ENCODE measurements at regions of chr11 and their contacts with region 1.

Region 1: DNA sequence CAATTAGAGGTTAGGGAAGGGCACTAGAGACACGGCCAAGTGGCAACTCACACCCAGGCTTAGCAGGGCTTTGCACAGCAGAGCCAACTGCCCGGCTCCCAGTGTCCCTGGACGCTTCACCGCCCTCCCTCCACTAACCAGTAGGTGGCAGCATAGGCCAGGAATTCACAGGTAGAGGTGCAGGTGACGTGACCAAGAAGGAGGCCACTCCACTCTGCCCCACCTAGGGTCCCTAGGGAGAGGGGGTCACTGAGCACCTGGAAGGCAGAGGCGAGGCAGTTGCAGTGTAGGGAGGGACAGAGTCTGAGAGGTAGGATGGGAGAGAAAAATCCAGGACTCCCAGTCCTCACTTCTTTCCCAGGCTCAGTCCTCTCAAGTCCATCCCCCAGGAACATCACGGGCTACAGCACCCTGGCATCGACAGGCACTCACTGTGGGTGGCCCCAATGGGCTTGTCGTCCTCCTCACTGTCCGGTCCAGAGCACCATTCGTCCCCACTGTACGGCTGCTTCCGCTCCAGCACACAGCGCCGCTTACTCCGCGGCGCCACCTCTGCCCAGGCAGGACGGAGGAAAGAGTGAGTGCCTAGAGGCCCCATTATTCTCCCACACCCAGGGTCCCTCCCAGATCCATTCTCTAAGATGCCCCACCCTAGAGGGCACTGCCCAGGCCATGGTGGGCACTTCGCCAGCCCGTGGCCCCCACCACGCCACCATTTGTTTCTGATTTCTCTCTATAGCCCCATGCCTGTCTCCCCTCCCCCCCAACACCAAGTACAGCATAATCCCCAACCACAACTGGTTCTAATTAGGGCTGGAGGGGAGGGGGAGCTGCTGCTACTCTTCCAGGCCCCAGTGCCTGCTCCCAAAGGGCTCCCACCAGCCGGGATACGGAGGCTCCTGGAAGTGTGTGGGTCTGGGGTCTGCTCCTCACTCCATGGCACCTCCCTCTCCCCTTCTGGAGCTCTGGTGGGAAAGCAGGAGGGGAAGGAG is 18.4 kb downstream of the BCL9L start:
- DNase-seq: peak; percentile 81 to 92 (median 90)
- H3K4me3 ChIP-seq: peak overlapping the region in 4 of 59 donors; percentile 11 to 16 (median 15)
- H3K27ac ChIP-seq: peak overlapping the region in 49 of 59 donors; percentile 1 to 98 (median 58)
- H3K27me3 ChIP-seq: no peaks in the 10 kb centered on the region
- CTCF ChIP-seq: peak; percentile 84 to 100 (median 96)

Region 2: DNA sequence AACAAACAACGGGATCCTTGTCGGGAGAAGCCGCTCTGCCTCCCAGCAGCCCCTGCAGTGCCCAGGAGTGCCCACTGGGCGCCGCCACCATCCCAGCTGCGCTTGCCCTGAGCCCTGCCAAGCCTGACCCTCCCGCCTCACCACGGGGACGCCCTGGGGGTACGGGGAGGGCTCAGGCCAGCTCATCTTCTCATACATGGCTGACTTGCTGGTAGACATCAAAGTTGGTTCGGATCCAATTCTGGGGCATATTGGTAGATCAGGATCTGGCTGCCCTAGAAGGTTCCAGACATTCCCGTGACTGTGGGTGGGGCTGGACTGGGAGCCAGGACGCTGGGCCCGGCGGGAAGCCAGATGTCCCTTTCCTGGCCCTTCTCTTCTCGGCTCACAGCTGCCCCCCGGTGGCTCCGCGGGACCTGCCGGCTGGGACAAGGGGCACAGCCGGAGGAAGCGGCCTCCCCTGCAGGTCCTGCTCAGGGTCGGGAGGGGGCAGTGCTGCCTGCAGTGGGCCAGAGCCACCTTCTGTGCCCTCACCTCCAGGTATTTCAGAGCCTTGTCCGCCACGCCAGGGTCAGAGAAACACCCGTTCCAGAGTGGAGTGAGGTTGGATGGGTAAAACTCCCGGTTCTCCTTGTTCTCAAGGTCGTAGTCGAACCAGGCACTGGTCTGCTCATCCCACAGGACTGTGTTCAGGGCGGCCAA is 217.3 kb before region 1 on chr11:
- intact Hi-C with region 1: loop called in 1 of 2 experiments (anchors 5 kb)
- DNase-seq: peak; percentile 83 to 96 (median 93)
- H3K4me3 ChIP-seq: peak overlapping the region; percentile 20 to 65 (median 52)
- H3K27ac ChIP-seq: peak overlapping the region; percentile 23 to 98 (median 93)
- H3K27me3 ChIP-seq: no peaks in the 10 kb centered on the region
- CTCF ChIP-seq: peak; percentile 53 to 96 (median 82)

Region 3: GRCh38 chr11:118791111-118791965 is 116.0 kb before region 1 on chr11 and contains the start of gene DDX6:
- intact Hi-C with region 1: loop called (anchors 5 to 10 kb)
- DNase-seq: peak; percentile 83 to 94 (median 90)
- H3K4me3 ChIP-seq: peak within 1 kb of the TSS; percentile 64 to 98 (median 87)
- H3K27ac ChIP-seq: peak within 1 kb of the TSS; percentile 94 to 100 (median 99)
- H3K27me3 ChIP-seq: no peaks in the 10 kb centered on the region
- CTCF ChIP-seq: peak in 30 of 56 donors; percentile 18 to 52 (median 38)
- total RNA-seq, gene DDX6: 139 to 229 (median 190) TPM

Region 4: GRCh38 chr11:118928108-118928870 is 20.9 kb after region 1 on chr11:
- intact Hi-C with region 1: loop called (anchors 1 kb)
- DNase-seq: peak; percentile 84 to 96 (median 92)
- H3K4me3 ChIP-seq: peak overlapping the region; percentile 65 to 100 (median 82)
- H3K27ac ChIP-seq: peak overlapping the region; percentile 83 to 100 (median 98)
- H3K27me3 ChIP-seq: no peaks in the 10 kb centered on the region
- CTCF ChIP-seq: peak; percentile 84 to 98 (median 94)

Region 5: DNA sequence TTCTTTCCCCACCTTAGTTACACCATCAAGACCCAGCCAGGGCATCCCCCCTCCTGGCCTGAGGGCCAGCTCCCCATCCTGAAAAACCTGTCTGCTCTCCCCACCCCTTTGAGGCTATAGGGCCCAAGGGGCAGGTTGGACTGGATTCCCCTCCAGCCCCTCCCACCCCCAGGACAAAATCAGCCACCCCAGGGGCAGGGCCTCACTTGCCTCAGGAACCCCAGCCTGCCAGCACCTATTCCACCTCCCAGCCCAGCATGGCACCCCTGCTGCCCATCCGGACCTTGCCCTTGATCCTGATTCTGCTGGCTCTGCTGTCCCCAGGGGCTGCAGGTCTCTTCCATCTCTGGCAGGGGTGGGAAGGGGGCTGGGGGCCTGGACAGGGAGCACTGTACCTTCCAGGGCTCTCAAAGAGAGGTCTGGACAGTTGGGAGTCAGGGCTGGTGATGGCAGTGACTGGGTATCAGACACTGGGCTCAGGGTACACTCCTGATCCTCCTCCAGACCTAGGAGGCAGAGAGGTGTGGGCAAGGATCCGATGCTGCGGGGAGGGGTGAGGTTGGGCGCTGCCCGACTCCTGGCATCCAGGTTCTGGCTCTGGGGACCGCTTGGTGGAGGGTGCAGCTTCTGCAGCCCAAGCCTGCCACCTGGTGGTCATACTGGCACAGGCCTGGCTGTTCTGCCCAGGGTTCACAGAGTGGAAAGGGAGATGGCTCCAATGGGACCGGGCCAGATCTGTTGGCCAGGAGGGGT is 48.9 kb after region 1 on chr11 and contains the start of gene UPK2:
- intact Hi-C with region 1: loop called (anchors 1 to 2 kb)
- DNase-seq: peak; percentile 85 to 94 (median 92)
- H3K4me3 ChIP-seq: peak within 1 kb of the TSS in 1 of 59 donors; percentile 8
- H3K27ac ChIP-seq: peak within 1 kb of the TSS in 1 of 59 donors; percentile 27
- H3K27me3 ChIP-seq: peaks cover 0 to 2% (median 0%) of the 10 kb centered on the region in 45 donors
- CTCF ChIP-seq: peak; percentile 86 to 99 (median 98)
- total RNA-seq, gene UPK2: 0.43 to 1.2 (median 0.59) TPM in 27 of 120 experiments, not detected in the others

Region 6: GRCh38 chr11:119196833-119197483 is 289.6 kb after region 1 on chr11:
- intact Hi-C with region 1: loop called in 1 of 2 experiments (anchors 10 kb)
- DNase-seq: peak in 4 of 10 donors; percentile 24 to 72 (median 49)
- H3K4me3 ChIP-seq: no peak overlapping the region
- H3K27ac ChIP-seq: no peak overlapping the region
- H3K27me3 ChIP-seq: no peaks in the 10 kb centered on the region
- CTCF ChIP-seq: peak; percentile 62 to 87 (median 76)

Region 7: GRCh38 chr11:119315131-119316015 is 408.0 kb after region 1 on chr11:
- intact Hi-C with region 1: loop called in 1 of 2 experiments (anchors 10 kb)
- DNase-seq: peak in 6 of 10 donors; percentile 65 to 82 (median 73)
- H3K4me3 ChIP-seq: peak overlapping the region; percentile 52 to 87 (median 72)
- H3K27ac ChIP-seq: peak overlapping the region; percentile 72 to 98 (median 94)
- H3K27me3 ChIP-seq: no peaks in the 10 kb centered on the region
- CTCF ChIP-seq: peak in 33 of 56 donors; percentile 9 to 48 (median 30)